Psoas muscle (tissue), 8 donors: ENCODE measurements at regions of chr13 and their contacts with region 1.

Region 1: DNA sequence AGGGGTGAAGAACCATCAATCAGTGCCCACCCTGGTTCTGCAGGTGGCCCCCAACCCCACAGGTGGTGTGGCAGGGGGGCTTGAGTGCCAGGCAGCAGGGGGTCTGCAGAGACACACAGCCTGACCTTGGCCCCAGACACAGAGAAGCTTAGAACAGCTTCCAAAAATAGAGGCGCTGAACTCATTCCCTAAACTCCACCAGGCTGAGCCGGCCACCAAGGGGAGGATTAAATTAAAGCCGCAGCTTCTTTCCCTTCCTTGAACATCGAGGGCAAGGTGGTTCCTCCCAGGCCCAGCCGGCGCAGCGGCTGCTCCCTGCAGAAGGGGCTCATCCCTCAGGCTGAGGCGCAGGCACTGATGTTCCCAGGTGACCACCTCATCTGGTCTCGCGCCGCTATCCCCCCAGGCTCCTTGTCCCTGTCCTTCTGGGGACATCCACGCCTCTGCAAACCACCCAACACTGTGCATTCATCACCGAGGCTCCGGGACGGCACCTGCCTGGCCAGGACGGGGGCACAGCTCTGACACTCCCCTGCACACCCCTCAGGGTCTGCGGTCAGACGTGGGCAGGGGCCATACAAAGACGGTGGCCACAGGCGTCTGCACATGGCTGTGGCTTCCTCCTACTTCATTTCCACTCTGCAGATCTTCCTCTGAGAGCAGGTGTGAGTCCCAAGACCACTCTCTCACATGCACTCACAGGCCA is 30.9 kb downstream of the LAMP1 start:
- DNase-seq: peak in 1 of 2 donors; percentile 70
- ATAC-seq: peak; percentile 79 to 88 (median 84)
- H3K4me3 ChIP-seq: peak overlapping the region; percentile 27
- H3K27ac ChIP-seq: peak overlapping the region; percentile 90
- H3K4me1 ChIP-seq: peaks cover 18% of the 10 kb centered on the region
- H3K27me3 ChIP-seq: no peaks in the 10 kb centered on the region
- CTCF ChIP-seq: no peak

Region 2: GRCh38 chr13:113304121-113304520 is 23.8 kb before region 1 on chr13:
- intact Hi-C with region 1: loop called in 1 of 2 experiments (anchors 1 kb)
- DNase-seq: peak in 1 of 2 donors; percentile 41
- ATAC-seq: peak in 3 of 4 donors; percentile 26 to 51 (median 46)
- H3K4me3 ChIP-seq: no peak overlapping the region
- H3K27ac ChIP-seq: peak overlapping the region; percentile 74
- H3K4me1 ChIP-seq: peaks cover 65% of the 10 kb centered on the region
- H3K27me3 ChIP-seq: no peaks in the 10 kb centered on the region
- CTCF ChIP-seq: no peak